ENCODE measurements at regions of chr1 and their contacts with region 1.

Region 1: GRCh38 chr1:45686317-45687013 is at the start of gene GPBP1L1:
- DNase-seq: peak; percentile 99
- H3K4me3 Mint-ChIP-seq: peak within 1 kb of the TSS; percentile 99
- H3K27ac Mint-ChIP-seq: peak within 1 kb of the TSS; percentile 99
- H3K4me1 Mint-ChIP-seq: peaks cover 50% of the 10 kb centered on the region
- H3K27me3 Mint-ChIP-seq: no peaks in the 10 kb centered on the region
- total RNA-seq, gene GPBP1L1: 106 TPM

Region 2: GRCh38 chr1:44807262-44808062 is 879.0 kb before region 1 on chr1 and contains the start of gene DYNLT4:
- CTCF ChIA-PET with region 1: no interaction called
- POLR2A ChIA-PET with region 1: no interaction called
- intact Hi-C with region 1: loop called (anchors 5 kb)
- DNase-seq: peak; percentile 95
- H3K4me3 Mint-ChIP-seq: peak within 1 kb of the TSS; percentile 73
- H3K27ac Mint-ChIP-seq: peak within 1 kb of the TSS; percentile 98
- H3K4me1 Mint-ChIP-seq: peaks cover 90% of the 10 kb centered on the region
- H3K27me3 Mint-ChIP-seq: no peaks in the 10 kb centered on the region
- total RNA-seq, gene DYNLT4: 0.40 to 0.41 TPM

Region 3: GRCh38 chr1:45499415-45499769 is 187.1 kb before region 1 on chr1:
- CTCF ChIA-PET with region 1: no interaction called
- POLR2A ChIA-PET with region 1: no interaction called
- intact Hi-C with region 1: loop called (anchors 1 kb)
- DNase-seq: peak; percentile 39
- H3K4me3 Mint-ChIP-seq: peak overlapping the region; percentile 95
- H3K27ac Mint-ChIP-seq: peak overlapping the region; percentile 83
- H3K4me1 Mint-ChIP-seq: peaks cover 30% of the 10 kb centered on the region
- H3K27me3 Mint-ChIP-seq: no peaks in the 10 kb centered on the region

Region 4: GRCh38 chr1:45750298-45751038 is 64.0 kb after region 1 on chr1 and contains the start of gene IPP:
- CTCF ChIA-PET with region 1: interaction called, 3 read pairs
- POLR2A ChIA-PET with region 1: interaction called, 4 read pairs
- intact Hi-C with region 1: loop called (anchors 1 kb)
- DNase-seq: peak; percentile 97
- H3K4me3 Mint-ChIP-seq: peak within 1 kb of the TSS; percentile 91
- H3K27ac Mint-ChIP-seq: peak within 1 kb of the TSS; percentile 95
- H3K4me1 Mint-ChIP-seq: peaks cover 33% of the 10 kb centered on the region
- H3K27me3 Mint-ChIP-seq: no peaks in the 10 kb centered on the region
- total RNA-seq, gene IPP: 21.4 to 22.9 TPM

Region 5: GRCh38 chr1:45864167-45865106 is 178.0 kb after region 1 on chr1:
- CTCF ChIA-PET with region 1: no interaction called
- POLR2A ChIA-PET with region 1: no interaction called
- intact Hi-C with region 1: loop called (anchors 5 kb)
- DNase-seq: no peak
- H3K4me3 Mint-ChIP-seq: peak overlapping the region; percentile 53
- H3K27ac Mint-ChIP-seq: peak overlapping the region; percentile 31
- H3K4me1 Mint-ChIP-seq: peaks cover 49% of the 10 kb centered on the region
- H3K27me3 Mint-ChIP-seq: no peaks in the 10 kb centered on the region

Region 6: DNA sequence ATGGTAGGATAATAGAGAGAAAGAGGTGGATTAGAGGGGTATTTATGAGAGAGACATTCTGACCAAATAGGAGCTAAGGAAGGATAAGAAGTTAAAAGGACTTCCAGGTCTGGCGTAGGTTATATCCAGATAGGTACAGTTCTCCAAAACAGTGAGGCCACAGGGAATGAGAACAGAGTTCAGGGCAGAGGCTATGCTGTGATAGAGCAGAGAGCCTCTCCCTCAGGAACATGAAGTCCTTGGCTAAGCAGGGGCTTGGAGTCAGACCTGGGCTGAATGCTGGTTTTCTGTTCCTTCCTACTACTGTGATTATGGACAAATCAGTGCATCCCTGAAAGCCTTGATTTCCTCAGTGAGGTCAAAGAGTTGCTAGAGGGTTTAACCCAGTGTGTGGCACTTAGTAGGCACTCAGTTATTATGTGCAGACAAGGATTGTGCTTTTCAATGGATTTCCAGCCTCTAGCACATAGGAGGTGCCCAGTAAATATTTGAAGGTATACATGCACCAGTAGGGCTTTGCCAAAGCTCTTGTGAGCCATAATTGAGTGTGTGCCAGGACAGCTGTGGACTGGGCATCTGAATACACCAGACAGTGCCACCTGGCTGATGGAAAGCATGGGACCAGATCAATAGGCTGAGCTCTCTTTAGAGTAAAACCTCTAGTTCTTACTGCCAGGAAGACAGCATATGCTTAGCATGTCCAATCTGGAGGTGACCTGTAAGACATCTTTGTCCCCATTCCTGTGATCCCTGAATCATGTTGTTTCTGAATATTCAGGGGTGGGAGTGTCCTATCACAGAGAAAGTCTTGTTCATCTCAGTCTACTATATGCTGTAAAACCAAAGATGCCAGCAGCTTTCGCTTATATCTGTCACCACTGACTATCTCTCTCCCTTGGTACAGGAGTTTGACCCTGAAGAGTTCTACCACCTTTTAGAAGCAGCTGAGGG is 334.9 kb after region 1 on chr1:
- CTCF ChIA-PET with region 1: no interaction called
- POLR2A ChIA-PET with region 1: no interaction called
- intact Hi-C with region 1: no loop called
- DNase-seq: no peak
- H3K4me3 Mint-ChIP-seq: no peak overlapping the region
- H3K27ac Mint-ChIP-seq: no peak overlapping the region
- H3K4me1 Mint-ChIP-seq: no peaks in the 10 kb centered on the region
- H3K27me3 Mint-ChIP-seq: no peaks in the 10 kb centered on the region

Region 7: DNA sequence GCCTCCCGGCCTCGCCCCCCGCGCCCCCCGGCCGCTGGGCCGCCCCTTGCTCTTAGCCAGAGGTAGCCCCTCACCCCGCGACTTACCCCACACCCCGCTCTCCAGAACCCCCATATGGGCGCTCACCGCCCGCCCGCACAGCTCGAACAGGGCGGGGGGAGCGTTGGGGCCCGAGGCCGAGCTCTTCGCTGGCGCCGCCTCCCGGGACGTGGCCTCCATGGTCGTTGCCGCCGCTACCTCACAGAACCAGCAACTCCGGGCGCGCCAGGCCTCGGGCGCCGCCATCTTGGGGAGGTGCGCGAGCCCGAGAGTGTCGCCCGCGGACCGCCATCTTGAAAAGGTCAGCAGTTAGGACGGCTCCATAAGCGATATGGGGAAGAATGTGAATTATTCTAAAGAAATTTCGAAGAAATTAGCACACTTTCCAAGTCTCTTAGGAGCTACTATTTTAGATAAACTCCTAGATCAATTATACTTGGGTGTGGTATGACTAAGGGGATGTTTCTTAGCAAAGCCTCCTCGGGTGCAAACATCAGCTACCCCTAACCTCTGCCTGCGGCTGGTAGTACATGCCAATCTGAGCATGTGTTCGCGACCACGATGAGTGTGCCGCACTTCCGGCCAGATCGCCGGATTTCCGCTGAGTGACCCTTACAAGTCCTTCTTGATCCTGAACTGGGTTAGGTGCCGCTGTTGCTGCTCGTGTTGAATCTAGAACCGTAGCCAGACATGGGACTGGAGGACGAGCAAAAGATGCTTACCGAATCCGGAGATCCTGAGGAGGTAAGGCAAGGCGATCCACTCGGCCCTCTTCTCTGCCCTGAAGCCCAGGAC is 616.8 kb after region 1 on chr1 and contains the starts of genes LRRC41 and UQCRH:
- CTCF ChIA-PET with region 1: no interaction called
- POLR2A ChIA-PET with region 1: interaction called, 3 read pairs
- intact Hi-C with region 1: loop called (anchors 10 kb)
- DNase-seq: peak; percentile 94
- H3K4me3 Mint-ChIP-seq: peak within 1 kb of the TSS; percentile 98
- H3K27ac Mint-ChIP-seq: peak within 1 kb of the TSS; percentile 94
- H3K4me1 Mint-ChIP-seq: peaks cover 44% of the 10 kb centered on the region
- H3K27me3 Mint-ChIP-seq: no peaks in the 10 kb centered on the region
- total RNA-seq, gene LRRC41: 31.4 to 34.6 TPM
- total RNA-seq, gene UQCRH: 351 to 353 TPM

Measured in activated CD4-positive, alpha-beta memory T cell treated with anti-CD3 and anti-CD28 coated beads for 36 hours (primary cell).